ENCODE measurements at regions of chr18 and their contacts with region 1.

Region 1: GRCh38 chr18:36309436-36310391 is 12.2 kb downstream of the FHOD3 start:
- DNase-seq: peak in 1 of 2 donors; percentile 63
- ATAC-seq: peak; percentile 28 to 42
- H3K4me3 ChIP-seq: no peak overlapping the region
- H3K27ac ChIP-seq: peak overlapping the region; percentile 1 to 54 (median 42)
- H3K4me1 ChIP-seq: peaks cover 56 to 60% of the 10 kb centered on the region in 2 donors
- H3K27me3 ChIP-seq: no peaks in the 10 kb centered on the region
- CTCF ChIP-seq: no peak
- POLR2A ChIP-seq: no peak

Region 2: DNA sequence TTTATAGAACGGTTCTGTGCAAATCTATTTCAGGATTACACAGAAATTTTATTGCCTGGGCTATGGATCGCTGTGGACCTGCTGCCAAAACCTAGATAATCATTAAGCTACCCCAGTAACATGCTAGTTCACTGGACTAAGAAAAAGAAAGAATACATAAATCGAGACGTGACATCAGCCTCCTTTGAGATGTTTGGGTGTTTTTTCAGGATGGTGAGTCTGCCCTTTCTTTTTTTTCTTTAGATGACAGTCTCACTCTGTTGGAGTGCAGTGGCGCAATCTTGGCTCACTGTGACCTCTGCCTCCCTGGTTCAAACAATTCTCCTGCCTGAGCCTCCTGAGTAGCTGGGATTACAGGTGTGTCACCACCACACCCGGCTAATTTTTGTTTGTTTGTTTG is 39.8 kb after region 1 on chr18:
- in situ Hi-C with region 1: no loop called
- intact Hi-C with region 1: loop called (anchors 5 kb)
- DNase-seq: peak in 1 of 2 donors; percentile 55
- ATAC-seq: peak; percentile 31 to 44
- H3K4me3 ChIP-seq: no peak overlapping the region
- H3K27ac ChIP-seq: peak overlapping the region; percentile 56 to 79 (median 75)
- H3K4me1 ChIP-seq: peaks cover 25 to 28% of the 10 kb centered on the region in 2 donors
- H3K27me3 ChIP-seq: no peaks in the 10 kb centered on the region
- CTCF ChIP-seq: no peak
- POLR2A ChIP-seq: no peak

Region 3: DNA sequence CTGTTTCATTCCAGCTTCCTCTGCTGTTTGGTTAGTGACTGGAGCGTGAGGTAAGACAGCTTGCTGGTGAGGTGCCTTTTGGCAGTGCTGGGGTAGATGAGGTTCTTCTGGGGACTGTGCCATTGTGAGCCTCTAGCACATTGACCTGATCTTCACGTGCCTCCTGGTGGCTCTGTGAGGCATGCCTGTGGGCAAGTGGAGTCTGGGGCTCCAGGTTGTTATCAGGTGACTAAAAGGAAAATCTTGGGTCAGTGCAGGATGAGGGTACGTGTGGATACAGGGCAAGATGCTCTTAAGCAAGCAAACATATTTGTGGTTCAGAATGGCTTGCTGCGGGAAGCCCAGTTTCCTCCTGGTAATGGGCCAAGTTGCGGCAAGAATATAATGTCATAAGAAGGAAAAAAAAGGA is 63.2 kb after region 1 on chr18:
- in situ Hi-C with region 1: no loop called
- intact Hi-C with region 1: loop called (anchors 10 kb)
- DNase-seq: peak in 1 of 2 donors; percentile 45
- ATAC-seq: peak; percentile 45 to 74
- H3K4me3 ChIP-seq: no peak overlapping the region
- H3K27ac ChIP-seq: no peak overlapping the region
- H3K4me1 ChIP-seq: peaks cover 0 to 4% of the 10 kb centered on the region in 2 donors
- H3K27me3 ChIP-seq: no peaks in the 10 kb centered on the region
- CTCF ChIP-seq: no peak
- POLR2A ChIP-seq: no peak

Region 4: GRCh38 chr18:36419905-36420531 is 110.3 kb after region 1 on chr18:
- in situ Hi-C with region 1: no loop called
- intact Hi-C with region 1: loop called (anchors 5 kb)
- DNase-seq: peak in 1 of 2 donors; percentile 72
- ATAC-seq: peak; percentile 92 to 93
- H3K4me3 ChIP-seq: peak overlapping the region in 2 of 4 donors; percentile 6 to 19
- H3K27ac ChIP-seq: peak overlapping the region; percentile 68 to 81 (median 79)
- H3K4me1 ChIP-seq: peaks cover 14 to 28% of the 10 kb centered on the region in 2 donors
- H3K27me3 ChIP-seq: no peaks in the 10 kb centered on the region
- CTCF ChIP-seq: peak in 4 of 5 experiments; percentile 16 to 47 (median 28)
- POLR2A ChIP-seq: peak in 1 of 2 donors; percentile 27

Region 5: DNA sequence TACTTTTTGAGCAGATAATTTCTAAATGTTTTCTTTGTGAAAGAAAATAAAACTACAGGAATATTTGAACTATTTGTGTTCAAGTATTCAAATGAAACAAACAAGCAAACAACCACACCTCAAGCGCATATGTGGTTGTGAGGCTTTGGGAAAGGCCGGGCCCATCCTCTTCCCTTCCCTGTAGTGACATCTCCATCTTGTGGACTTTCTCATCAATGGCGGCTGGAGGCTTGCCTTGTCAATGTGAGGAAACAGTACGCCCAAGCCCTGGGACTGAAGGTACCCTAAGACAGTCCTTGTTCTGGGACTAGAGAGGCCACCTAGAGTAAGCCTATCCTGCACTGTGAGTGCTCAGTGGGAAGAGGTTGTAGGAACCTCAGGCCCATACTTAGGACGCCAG is 352.3 kb after region 1 on chr18:
- in situ Hi-C with region 1: no loop called
- intact Hi-C with region 1: loop called (anchors 10 kb)
- DNase-seq: no peak
- ATAC-seq: no peak
- H3K4me3 ChIP-seq: no peak overlapping the region
- H3K27ac ChIP-seq: peak overlapping the region in 1 of 4 donors; percentile 7
- H3K4me1 ChIP-seq: peaks cover 9 to 16% of the 10 kb centered on the region in 2 donors
- H3K27me3 ChIP-seq: no peaks in the 10 kb centered on the region
- CTCF ChIP-seq: no peak
- POLR2A ChIP-seq: no peak